ENCODE measurements at regions of chr2 and their contacts with region 1.

Region 1: DNA sequence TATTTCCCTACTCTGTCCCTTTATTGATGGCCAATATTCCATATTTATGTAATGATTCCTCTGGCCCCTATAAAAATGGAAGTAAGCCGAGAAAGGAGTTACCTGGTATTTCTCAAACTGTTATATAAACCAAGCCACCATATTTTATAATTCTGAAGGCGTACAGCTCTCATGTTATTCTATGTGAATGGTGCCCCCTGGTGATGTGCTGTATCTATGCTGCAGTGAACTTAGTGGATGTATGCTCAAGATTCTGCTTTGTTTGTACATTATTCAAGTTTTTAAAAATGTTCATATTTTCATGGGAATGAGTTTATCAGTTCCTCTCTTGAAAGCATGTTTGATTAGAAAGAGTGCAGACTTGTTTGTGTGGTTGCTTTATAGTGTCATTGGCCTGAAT is 194.5 kb upstream of the LRRTM1 start:
- DNase-seq: peak in 5 of 10 donors; percentile 20 to 67 (median 44)

Region 2: GRCh38 chr2:80326214-80326613 is 172.9 kb before region 1 on chr2:
- intact Hi-C with region 1: loop called (anchors 1 kb)
- DNase-seq: peak in 1 of 10 donors; percentile 53

Measured in posterior cingulate gyrus (tissue), 11 donors.